B cell (primary cell): ENCODE measurements at regions of chr1 and their contacts with region 1.

Region 1: DNA sequence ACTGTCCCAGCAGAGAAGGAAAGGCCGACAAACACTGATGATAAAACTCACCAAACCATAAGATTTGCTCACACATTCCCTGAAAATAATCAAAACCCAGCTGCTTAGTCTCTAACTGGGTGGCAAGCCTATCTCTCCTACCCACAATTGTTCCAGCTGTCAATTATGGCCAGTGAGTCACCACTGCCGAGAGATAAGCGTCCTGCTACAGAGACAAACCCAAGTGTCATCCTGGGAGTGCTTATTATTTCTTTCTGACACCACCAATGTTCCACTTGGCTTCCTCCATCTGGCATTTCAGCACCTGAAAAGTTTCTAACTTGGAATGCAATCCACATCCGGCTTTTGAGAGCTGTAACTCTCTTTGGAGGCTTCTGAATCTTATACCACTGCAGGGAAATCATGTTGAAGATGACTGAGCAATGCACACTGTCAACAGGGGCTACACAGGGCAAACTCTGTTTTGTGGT is 51.5 kb upstream of the VAV3 start:
- DNase-seq: no peak
- ATAC-seq: no peak
- H3K4me3 ChIP-seq: no peak overlapping the region
- H3K4me3 Mint-ChIP-seq: no peak overlapping the region
- H3K27ac ChIP-seq: no peak overlapping the region
- H3K27ac Mint-ChIP-seq: no peak overlapping the region
- H3K4me1 ChIP-seq: peaks cover 0 to 3% of the 10 kb centered on the region in 2 donors
- H3K4me1 Mint-ChIP-seq: no peaks in the 10 kb centered on the region
- H3K27me3 ChIP-seq: no peaks in the 10 kb centered on the region
- H3K27me3 Mint-ChIP-seq: no peaks in the 10 kb centered on the region
- CTCF ChIP-seq: no peak

Region 2: DNA sequence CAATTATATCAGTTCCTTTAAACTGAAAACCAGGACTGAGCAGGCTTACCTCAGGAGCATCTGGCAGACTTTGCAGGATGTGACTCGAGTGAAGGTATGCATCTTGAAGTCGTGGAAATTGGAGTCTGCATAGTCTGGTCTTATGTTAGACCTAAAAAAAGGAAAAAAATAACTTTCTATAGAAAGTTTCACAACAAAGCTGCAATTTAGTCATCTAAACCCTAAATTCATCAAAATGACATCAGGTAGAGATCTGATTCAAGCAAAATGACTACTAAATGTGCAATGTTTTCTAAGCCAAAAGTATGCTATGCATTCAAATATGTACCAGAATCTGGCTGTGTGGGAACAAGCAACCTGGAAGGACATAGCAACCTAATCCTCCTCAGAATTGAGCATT is 311.6 kb before region 1 on chr1:
- CTCF ChIA-PET with region 1: no interaction called
- POLR2A ChIA-PET with region 1: no interaction called
- intact Hi-C with region 1: no loop called
- DNase-seq: no peak
- ATAC-seq: no peak
- H3K4me3 ChIP-seq: no peak overlapping the region
- H3K4me3 Mint-ChIP-seq: no peak overlapping the region
- H3K27ac ChIP-seq: no peak overlapping the region
- H3K27ac Mint-ChIP-seq: no peak overlapping the region
- H3K4me1 ChIP-seq: no peaks in the 10 kb centered on the region
- H3K4me1 Mint-ChIP-seq: no peaks in the 10 kb centered on the region
- H3K27me3 ChIP-seq: no peaks in the 10 kb centered on the region
- H3K27me3 Mint-ChIP-seq: no peaks in the 10 kb centered on the region
- CTCF ChIP-seq: no peak

Region 3: GRCh38 chr1:107949467-107950253 is 66.8 kb before region 1 on chr1:
- CTCF ChIA-PET with region 1: no interaction called
- POLR2A ChIA-PET with region 1: no interaction called
- intact Hi-C with region 1: no loop called
- DNase-seq: no peak
- ATAC-seq: no peak
- H3K4me3 ChIP-seq: no peak overlapping the region
- H3K4me3 Mint-ChIP-seq: peak overlapping the region; percentile 2
- H3K27ac ChIP-seq: peak overlapping the region in 1 of 2 donors; percentile 44
- H3K27ac Mint-ChIP-seq: peak overlapping the region; percentile 70
- H3K4me1 ChIP-seq: peaks cover 44 to 75% of the 10 kb centered on the region in 2 donors
- H3K4me1 Mint-ChIP-seq: peaks cover 75% of the 10 kb centered on the region
- H3K27me3 ChIP-seq: no peaks in the 10 kb centered on the region
- H3K27me3 Mint-ChIP-seq: no peaks in the 10 kb centered on the region
- CTCF ChIP-seq: no peak

Region 4: DNA sequence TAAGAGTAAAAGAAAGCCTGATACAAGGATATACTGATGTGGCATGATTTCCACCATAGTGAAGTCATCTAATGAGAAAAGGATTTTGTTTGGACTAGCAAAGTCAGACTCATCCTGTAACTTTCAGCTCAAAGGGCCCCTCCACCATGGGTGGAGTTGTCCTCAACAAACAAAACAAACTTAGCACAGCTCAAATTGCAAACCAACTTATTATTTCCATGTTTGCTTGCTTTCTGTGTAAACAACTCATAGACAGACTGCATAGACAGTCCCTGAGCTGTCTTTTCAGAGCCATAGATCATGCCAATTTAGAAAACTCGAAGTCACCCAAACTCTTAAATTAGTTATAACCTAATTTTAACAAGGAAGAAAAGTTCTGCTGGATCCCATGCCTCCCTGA is 17.9 kb after region 1 on chr1:
- CTCF ChIA-PET with region 1: interaction called, 6 read pairs
- POLR2A ChIA-PET with region 1: no interaction called
- intact Hi-C with region 1: loop called (anchors 2 kb)
- DNase-seq: no peak
- ATAC-seq: no peak
- H3K4me3 ChIP-seq: no peak overlapping the region
- H3K4me3 Mint-ChIP-seq: no peak overlapping the region
- H3K27ac ChIP-seq: no peak overlapping the region
- H3K27ac Mint-ChIP-seq: no peak overlapping the region
- H3K4me1 ChIP-seq: peaks cover under 1% of the 10 kb centered on the region in 2 donors
- H3K4me1 Mint-ChIP-seq: no peaks in the 10 kb centered on the region
- H3K27me3 ChIP-seq: no peaks in the 10 kb centered on the region
- H3K27me3 Mint-ChIP-seq: no peaks in the 10 kb centered on the region
- CTCF ChIP-seq: no peak